Naive thymus-derived CD4-positive, alpha-beta T cell (primary cell): ENCODE measurements at regions of chr1 and their contacts with region 1.

Region 1: GRCh38 chr1:47725992-47726855 is 271.0 kb downstream of the TRABD2B start:
- DNase-seq: peak; percentile 9 to 56 (median 42)
- ATAC-seq: peak; percentile 79
- H3K4me3 ChIP-seq: no peak overlapping the region
- H3K4me3 Mint-ChIP-seq: peak overlapping the region; percentile 6 to 83 (median 64)
- H3K27ac ChIP-seq: no peak overlapping the region
- H3K27ac Mint-ChIP-seq: no peak overlapping the region
- H3K4me1 ChIP-seq: no peaks in the 10 kb centered on the region
- H3K4me1 Mint-ChIP-seq: peaks cover 0 to 11% (median 5%) of the 10 kb centered on the region in 7 donors
- H3K27me3 ChIP-seq: peaks cover 3 to 5% of the 10 kb centered on the region in 2 donors
- H3K27me3 Mint-ChIP-seq: peaks cover 36 to 66% (median 45%) of the 10 kb centered on the region in 5 donors

Region 2: DNA sequence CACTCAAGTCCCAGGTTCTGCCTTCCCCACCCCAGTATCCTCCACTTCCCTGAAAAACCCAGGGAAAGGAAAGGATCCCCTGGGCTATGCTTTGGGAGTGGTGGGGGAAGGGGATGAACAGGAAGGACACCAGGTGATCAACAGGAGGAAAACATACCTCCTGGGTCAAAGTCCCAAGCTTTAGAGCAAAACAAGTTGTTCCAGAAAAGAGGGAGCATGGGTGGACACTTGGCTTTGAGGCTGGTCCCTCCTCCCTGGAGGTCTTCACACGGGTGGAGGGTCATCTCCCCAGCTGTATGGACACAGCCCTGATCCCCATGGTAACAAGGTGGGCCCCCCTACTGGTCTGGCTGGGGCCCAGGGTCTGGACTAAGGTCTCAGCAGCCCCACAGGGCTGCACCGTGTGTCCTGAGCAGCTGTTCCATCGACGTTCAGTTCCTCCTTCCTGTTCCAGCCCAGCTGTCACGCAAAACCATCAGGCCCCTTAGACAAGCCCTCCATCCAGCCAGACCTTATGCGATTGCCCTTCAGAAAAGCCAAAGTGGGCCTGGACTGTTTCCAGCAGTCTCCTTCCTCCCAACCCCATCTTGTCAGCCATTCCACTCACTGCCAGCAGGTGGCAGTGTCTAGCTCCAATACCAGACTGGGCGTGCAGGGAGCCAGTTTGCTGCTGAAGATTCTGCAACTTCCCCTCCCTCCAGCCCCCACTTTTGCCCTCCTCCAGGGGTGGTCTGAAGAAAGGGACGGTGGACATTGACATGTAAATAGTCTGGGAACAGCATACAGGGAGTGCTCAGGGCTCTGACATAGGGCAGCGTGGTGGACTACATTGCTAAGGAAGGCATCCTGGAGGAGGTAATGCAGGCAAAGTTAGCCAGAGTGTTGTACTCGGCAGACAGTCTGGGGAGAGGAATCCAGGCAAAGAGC is 533.5 kb before region 1 on chr1:
- CTCF ChIA-PET with region 1: interaction called, 5 read pairs
- POLR2A ChIA-PET with region 1: no interaction called
- intact Hi-C with region 1: loop called in 1 of 2 experiments (anchors 1 kb)
- DNase-seq: peak; percentile 25 to 72 (median 53)
- ATAC-seq: peak; percentile 84
- H3K4me3 ChIP-seq: no peak overlapping the region
- H3K4me3 Mint-ChIP-seq: no peak overlapping the region
- H3K27ac ChIP-seq: no peak overlapping the region
- H3K27ac Mint-ChIP-seq: peak overlapping the region in 1 of 9 donors; percentile 48
- H3K4me1 ChIP-seq: no peaks in the 10 kb centered on the region
- H3K4me1 Mint-ChIP-seq: peaks cover 0 to 2% (median 0%) of the 10 kb centered on the region in 7 donors
- H3K27me3 ChIP-seq: no peaks in the 10 kb centered on the region
- H3K27me3 Mint-ChIP-seq: peaks cover 7 to 20% (median 9%) of the 10 kb centered on the region in 5 donors

Region 3: DNA sequence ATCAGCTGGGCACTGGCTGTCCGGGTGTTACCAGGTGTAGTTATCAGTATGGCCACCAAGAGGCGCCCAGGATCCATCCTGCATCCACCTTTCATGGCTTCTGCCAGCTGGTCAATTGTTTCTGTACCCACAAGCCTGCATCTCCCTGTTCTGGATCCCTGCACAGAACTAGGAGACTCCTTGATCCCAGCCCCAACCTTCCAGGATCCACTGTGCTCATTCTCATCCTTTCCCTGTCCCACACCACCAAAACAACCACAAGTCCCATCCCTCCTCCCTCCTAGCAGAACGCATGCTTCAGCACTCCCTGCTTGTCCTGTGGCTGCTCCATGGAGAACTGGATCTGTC is 337.4 kb before region 1 on chr1:
- CTCF ChIA-PET with region 1: interaction called, 5 read pairs
- POLR2A ChIA-PET with region 1: no interaction called
- intact Hi-C with region 1: loop called (anchors 1 kb)
- DNase-seq: peak in 4 of 9 donors; percentile 12 to 43 (median 16)
- ATAC-seq: peak; percentile 57
- H3K4me3 ChIP-seq: no peak overlapping the region
- H3K4me3 Mint-ChIP-seq: no peak overlapping the region
- H3K27ac ChIP-seq: no peak overlapping the region
- H3K27ac Mint-ChIP-seq: no peak overlapping the region
- H3K4me1 ChIP-seq: no peaks in the 10 kb centered on the region
- H3K4me1 Mint-ChIP-seq: peaks cover 0 to 4% (median 0%) of the 10 kb centered on the region in 7 donors
- H3K27me3 ChIP-seq: no peaks in the 10 kb centered on the region
- H3K27me3 Mint-ChIP-seq: peaks cover 3 to 9% (median 7%) of the 10 kb centered on the region in 5 donors

Region 4: GRCh38 chr1:47432071-47433036 is 293.9 kb before region 1 on chr1:
- CTCF ChIA-PET with region 1: interaction called, 16 read pairs
- POLR2A ChIA-PET with region 1: no interaction called
- intact Hi-C with region 1: loop called (anchors 1 to 2 kb)
- DNase-seq: peak in 8 of 9 donors; percentile 44 to 68 (median 58)
- ATAC-seq: peak; percentile 54
- H3K4me3 ChIP-seq: peak overlapping the region; percentile 20
- H3K4me3 Mint-ChIP-seq: peak overlapping the region; percentile 30 to 81 (median 75)
- H3K27ac ChIP-seq: no peak overlapping the region
- H3K27ac Mint-ChIP-seq: peak overlapping the region in 2 of 9 donors; percentile 38 to 55
- H3K4me1 ChIP-seq: peaks cover 8 to 38% of the 10 kb centered on the region in 2 donors
- H3K4me1 Mint-ChIP-seq: peaks cover 25 to 47% (median 39%) of the 10 kb centered on the region in 7 donors
- H3K27me3 ChIP-seq: peaks cover 0 to 25% of the 10 kb centered on the region in 2 donors
- H3K27me3 Mint-ChIP-seq: peaks cover 46 to 52% (median 49%) of the 10 kb centered on the region in 5 donors

Region 5: DNA sequence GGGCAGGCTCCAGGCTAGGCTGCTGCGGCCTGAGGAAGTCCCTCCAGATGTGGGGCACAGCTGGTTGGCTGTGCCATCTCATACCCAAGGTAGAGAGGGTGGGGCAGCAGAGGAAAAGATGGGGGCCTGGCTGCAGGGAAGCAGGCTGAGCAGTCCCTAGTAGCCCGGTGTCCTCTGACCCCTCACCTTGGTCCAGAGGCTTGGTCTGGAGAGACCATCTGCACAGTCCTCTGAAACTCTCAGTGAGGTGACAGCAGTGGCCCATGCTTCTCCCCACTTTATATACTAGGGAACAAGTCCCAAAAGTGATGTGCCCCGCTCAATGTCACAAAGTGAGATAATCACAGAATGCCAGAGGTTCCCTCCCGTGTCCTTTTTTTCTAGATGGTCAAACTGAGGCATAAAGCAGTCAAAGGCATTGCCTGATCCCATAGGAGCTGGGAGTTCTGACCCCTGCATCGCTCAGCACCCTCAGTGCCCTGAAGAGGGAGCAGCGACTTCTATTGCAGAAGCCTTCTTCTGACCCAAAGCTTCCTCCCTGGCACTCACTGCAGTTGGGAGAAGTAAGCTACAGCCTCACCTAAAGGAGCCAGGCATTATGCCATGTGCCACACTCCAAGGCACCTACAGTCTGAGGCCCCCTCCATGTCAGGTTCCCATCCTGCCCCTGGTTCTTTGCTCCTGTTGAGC is 225.5 kb after region 1 on chr1:
- CTCF ChIA-PET with region 1: no interaction called
- POLR2A ChIA-PET with region 1: no interaction called
- intact Hi-C with region 1: no loop called
- DNase-seq: no peak
- ATAC-seq: no peak
- H3K4me3 ChIP-seq: no peak overlapping the region
- H3K4me3 Mint-ChIP-seq: no peak overlapping the region
- H3K27ac ChIP-seq: no peak overlapping the region
- H3K27ac Mint-ChIP-seq: no peak overlapping the region
- H3K4me1 ChIP-seq: no peaks in the 10 kb centered on the region
- H3K4me1 Mint-ChIP-seq: no peaks in the 10 kb centered on the region
- H3K27me3 ChIP-seq: no peaks in the 10 kb centered on the region
- H3K27me3 Mint-ChIP-seq: peaks cover 0 to 18% (median 15%) of the 10 kb centered on the region in 5 donors